ENCODE measurements at regions of chr20 and their contacts with region 1.

Region 1: DNA sequence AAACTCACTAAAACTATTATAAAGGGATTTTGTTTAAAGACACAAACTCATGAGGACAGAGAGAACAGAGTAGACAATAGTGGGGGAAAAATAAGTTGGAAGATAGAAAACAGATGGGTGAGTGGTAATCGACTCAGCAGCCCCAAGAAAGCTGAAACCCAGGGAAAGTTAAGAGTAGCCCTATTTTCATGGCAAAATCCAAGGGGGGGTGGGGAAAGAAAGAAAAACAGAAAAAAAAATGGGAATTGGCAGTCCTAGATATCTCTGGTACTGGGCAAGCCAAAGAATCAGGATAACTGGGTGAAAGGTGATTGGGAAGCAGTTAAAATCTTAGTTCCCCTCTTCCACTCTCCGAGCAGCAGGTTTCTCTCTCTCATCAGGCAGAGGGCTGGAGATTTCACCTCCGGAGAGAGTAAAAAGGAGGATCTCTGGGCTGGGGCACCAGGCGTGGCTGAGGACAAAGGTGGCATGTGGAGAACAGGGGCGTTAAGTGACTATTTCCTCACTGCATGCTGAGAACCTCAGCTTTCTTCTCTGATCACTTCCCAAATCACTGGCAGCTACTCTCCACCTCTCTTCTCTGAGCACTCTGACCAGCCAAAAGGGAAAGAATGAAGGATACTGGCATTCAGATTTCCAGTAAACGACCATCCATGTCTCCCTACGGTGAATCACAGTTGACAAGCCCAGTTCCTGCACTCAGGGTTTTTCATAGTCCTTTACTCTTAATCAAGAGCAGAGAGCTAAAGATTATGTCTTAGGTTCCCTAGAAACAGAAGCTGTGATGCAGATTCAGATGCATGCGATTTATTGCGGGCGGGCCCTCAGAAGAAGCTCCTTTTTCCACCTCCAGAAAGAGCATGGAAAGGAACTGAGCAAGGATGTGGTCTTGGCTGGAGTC is 7.3 kb upstream of the RNF24 start:
- DNase-seq: no peak
- H3K4me3 ChIP-seq: no peak overlapping the region
- CTCF ChIP-seq: no peak

Region 2: GRCh38 chr20:3964719-3965118 is 57.9 kb before region 1 on chr20:
- in situ Hi-C with region 1: loop called (anchors 5 kb)
- DNase-seq: no peak
- H3K4me3 ChIP-seq: no peak overlapping the region
- CTCF ChIP-seq: no peak

Region 3: GRCh38 chr20:4082406-4083097 is 59.9 kb after region 1 on chr20:
- in situ Hi-C with region 1: loop called (anchors 5 kb)
- DNase-seq: peak; percentile 83
- H3K4me3 ChIP-seq: no peak overlapping the region
- CTCF ChIP-seq: no peak